WTC11 (cell line): ENCODE measurements at regions of chr1 and their contacts with region 1.

Region 1: GRCh38 chr1:45569962-45570581 is 13.8 kb upstream of the NASP start:
- DNase-seq: peak; percentile 79
- ATAC-seq: peak; percentile 74
- H3K4me3 Mint-ChIP-seq: no peak overlapping the region
- H3K27ac Mint-ChIP-seq: no peak overlapping the region; the same call in 1 of the 2 replicates
- H3K4me1 Mint-ChIP-seq: peaks cover 30% of the 10 kb centered on the region
- H3K27me3 Mint-ChIP-seq: no peaks in the 10 kb centered on the region
- CTCF ChIP-seq: peak; percentile 98

Region 2: DNA sequence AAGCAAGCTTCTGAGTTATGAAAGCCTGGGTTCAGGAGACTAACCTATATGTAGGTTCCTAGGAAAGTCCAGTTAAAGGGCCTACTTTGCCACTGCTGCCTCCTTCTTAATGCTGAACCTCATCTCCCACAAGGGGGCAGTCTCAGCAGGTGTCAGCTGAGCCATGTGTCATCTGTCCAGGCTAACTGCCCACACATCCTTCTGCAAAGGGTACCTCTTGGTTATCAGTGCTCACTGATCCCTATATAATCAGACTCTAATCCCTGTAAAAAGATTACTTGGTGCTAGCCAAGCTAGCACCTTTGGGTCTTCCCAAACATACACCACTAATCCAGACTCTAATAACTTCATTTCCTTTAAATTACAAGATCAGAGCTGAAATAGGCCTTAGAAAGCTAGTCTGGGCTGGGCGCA is 57.4 kb before region 1 on chr1:
- CTCF ChIA-PET with region 1: interaction called, 14 read pairs
- POLR2A ChIA-PET with region 1: no interaction called
- DNase-seq: peak; percentile 67
- ATAC-seq: peak; percentile 55
- H3K4me3 Mint-ChIP-seq: no peak overlapping the region
- H3K27ac Mint-ChIP-seq: 0 out of 2 replicates have a peak overlapping the region, but pooled peaks have one; percentile 7
- H3K4me1 Mint-ChIP-seq: no peaks in the 10 kb centered on the region
- H3K27me3 Mint-ChIP-seq: no peaks in the 10 kb centered on the region
- CTCF ChIP-seq: peak; percentile 53

Region 3: GRCh38 chr1:45550401-45551351 is 19.4 kb before region 1 on chr1 and contains the start of gene AKR1A1:
- CTCF ChIA-PET with region 1: interaction called, 17 read pairs
- POLR2A ChIA-PET with region 1: no interaction called
- DNase-seq: peak; percentile 90
- ATAC-seq: peak; percentile 93
- H3K4me3 Mint-ChIP-seq: peak within 1 kb of the TSS; percentile 92
- H3K27ac Mint-ChIP-seq: peak within 1 kb of the TSS; percentile 86
- H3K4me1 Mint-ChIP-seq: peaks cover 13% of the 10 kb centered on the region
- H3K27me3 Mint-ChIP-seq: no peaks in the 10 kb centered on the region
- CTCF ChIP-seq: no peak
- total RNA-seq, gene AKR1A1: 338 to 380 TPM (median 371 TPM) in 3 replicates